ENCODE measurements at regions of chr1 and their contacts with region 1.

Region 1: DNA sequence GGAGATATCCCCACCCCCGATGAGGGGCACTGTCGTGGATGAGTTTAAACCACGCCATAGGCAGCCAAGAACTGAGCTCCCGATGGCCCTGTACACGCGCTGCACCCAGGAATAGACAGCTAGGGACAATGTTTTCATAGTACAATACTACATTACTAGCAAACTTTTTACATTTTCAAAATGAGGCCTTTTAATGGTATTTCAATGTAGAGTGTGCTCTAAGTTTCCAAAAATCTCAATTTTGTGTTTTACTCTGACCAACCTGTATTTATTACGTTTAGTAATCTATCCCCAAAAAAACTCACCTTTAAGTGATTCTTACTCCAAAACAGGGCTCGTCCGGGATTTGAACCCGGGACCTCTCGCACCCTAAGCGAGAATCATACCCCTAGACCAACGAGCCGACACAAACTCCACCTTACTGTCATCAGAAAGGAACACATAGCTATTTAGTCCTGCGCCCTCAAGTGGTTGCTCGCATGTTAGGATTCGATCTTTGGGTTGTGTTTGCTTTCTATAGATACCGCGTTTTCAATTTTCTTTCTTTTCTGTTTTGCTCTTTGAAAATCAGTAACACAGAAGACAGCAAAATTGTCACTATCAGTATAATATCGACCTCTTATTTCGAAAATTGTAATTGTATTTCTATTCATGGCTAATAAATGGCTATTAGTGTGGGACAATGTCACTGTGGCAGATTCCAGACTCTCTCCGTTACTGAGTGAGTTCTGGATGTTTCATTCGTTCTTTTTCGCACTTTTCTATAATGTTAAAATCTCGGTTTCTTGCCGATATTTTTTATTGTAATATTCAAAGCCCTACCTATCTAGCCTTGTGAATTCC is 6.4 kb upstream of the MPZL1 start:
- DNase-seq: peak; percentile 69
- ATAC-seq: peak; percentile 51
- H3K4me3 Mint-ChIP-seq: peak overlapping the region; percentile 85
- H3K27ac Mint-ChIP-seq: peak overlapping the region; percentile 98
- H3K4me1 Mint-ChIP-seq: peaks cover 68% of the 10 kb centered on the region
- H3K27me3 Mint-ChIP-seq: peaks cover 7% of the 10 kb centered on the region
- CTCF ChIP-seq: peak; percentile 68

Region 2: DNA sequence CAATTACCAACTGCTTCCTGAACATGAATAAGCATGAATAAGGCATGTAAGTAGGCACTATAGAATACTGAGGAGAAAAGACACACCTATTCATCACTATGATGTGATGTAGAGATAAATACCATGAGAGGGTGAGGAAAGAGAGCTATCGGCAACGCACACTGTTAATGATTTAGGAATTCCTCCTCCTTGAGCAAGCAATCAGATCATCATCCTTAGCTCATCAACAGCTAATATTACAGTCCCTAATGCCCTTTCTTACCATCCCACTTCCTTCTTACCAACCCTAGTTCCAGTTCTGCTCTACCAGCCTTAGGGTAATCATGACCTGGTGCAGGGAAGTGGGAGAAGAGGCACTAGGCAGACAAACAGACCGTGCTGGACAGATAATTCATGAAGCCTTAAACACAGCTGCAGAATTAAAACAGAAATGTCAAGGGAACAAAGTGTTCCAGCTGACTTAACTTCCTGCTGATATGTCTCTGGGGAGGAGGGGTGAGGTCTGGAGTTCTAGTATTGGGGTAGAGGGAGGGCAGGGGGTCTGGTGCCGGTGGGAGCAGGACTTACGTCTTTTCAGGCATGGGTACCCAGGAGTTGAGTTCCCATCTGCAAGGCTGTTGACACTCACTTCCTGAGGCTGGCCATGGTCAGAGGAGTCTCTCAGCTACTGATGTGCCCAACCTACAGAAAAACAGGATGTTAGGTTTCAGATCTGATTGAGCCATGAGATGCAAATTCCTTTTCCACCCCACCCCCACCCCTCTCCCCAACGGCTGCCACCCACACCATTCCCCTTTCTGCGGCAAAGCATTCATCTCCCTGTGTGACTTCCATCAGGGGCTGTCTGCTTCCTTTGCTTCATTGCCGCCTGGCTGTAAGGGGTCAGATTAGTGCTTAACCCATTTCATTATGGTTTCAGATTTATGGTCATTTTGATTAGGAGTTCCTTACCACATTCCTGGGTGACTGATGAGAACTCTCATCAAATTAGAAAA is 97.9 kb before region 1 on chr1:
- CTCF ChIA-PET with region 1: no interaction called
- POLR2A ChIA-PET with region 1: interaction called, 7 read pairs
- intact Hi-C with region 1: loop called (anchors 1 kb)
- DNase-seq: peak; percentile 62
- ATAC-seq: peak; percentile 89
- H3K4me3 Mint-ChIP-seq: peak overlapping the region; percentile 77
- H3K27ac Mint-ChIP-seq: peak overlapping the region; percentile 94
- H3K4me1 Mint-ChIP-seq: peaks cover 92% of the 10 kb centered on the region
- H3K27me3 Mint-ChIP-seq: no peaks in the 10 kb centered on the region
- CTCF ChIP-seq: no peak

Region 3: DNA sequence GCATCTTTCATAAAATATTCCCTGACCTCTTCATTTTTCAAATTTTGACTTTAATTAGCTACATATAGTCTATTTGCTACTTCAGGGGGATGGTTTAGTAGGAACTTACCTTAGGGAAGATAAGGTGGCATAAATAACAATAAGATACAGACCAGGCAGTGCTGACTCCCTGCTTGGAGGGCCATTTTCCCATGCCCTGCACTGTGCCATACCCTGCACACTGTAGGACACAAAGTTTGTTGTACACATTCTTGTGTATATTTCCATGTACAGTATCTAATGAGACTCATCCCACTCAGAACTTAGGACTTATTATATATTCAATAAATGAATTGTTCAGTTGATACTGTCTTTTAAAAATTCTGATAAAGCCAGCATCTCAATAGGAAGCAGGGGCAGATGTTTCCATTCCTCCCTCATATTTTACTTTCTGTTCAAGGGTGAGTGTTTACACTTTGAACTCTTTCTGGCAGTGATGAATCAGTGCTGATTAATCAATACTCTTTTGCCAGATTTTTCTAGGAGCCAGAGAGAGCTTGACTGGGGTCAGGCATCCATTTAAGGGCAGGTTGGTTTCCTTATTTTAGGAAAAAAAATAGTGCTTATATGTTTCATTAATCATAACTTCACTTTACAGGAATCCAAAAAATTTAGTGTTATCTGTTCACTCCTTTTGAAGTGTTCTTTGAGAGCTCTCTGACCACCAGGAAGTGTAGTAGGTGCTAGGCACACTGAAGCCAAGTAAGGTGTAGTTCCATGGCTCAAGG is 37.0 kb after region 1 on chr1:
- CTCF ChIA-PET with region 1: interaction called, 17 read pairs
- POLR2A ChIA-PET with region 1: interaction called, 12 read pairs
- intact Hi-C with region 1: loop called (anchors 1 kb)
- DNase-seq: no peak
- ATAC-seq: no peak
- H3K4me3 Mint-ChIP-seq: peak overlapping the region; percentile 77
- H3K27ac Mint-ChIP-seq: peak overlapping the region; percentile 84
- H3K4me1 Mint-ChIP-seq: peaks cover 80% of the 10 kb centered on the region
- H3K27me3 Mint-ChIP-seq: no peaks in the 10 kb centered on the region
- CTCF ChIP-seq: no peak

Region 4: DNA sequence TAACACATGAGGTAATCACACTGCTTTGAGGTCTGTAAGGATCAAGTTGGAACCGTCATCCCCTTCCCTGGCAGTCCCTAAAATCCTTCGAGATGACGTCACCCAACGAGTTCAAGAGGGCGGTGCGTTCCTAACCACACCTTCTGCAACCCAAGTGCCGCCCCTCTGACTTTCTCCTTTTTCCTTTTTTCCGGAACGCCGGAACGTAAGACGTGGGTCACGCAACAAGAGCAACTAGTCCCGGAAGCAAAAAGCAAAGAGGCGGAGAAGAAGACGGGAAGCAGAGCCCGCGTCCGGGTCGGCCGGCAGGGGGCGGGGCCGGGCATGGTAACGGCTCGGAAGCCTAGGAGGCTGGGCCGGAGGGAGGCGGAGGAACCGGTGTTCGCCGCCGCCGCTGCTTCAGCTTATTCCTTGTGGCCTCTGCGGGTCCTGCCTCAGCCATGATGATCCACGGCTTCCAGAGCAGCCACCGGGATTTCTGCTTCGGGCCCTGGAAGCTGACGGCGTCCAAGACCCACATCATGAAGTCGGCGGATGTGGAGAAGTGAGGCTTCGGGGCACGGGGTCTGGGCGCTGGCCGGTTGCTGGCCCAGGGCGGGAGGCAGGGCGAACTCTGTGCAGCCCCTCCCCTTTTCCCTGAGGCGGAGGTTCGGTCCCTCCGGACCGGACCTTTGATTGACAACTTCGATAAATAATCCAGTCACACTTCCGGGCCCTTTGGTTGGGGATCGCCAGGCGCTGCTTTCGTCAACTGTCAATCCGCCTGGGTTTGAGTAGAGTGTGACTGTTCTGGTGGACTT is 463.5 kb after region 1 on chr1 and contains the start of gene TIPRL:
- CTCF ChIA-PET with region 1: no interaction called
- POLR2A ChIA-PET with region 1: no interaction called
- intact Hi-C with region 1: loop called (anchors 2 kb)
- DNase-seq: peak; percentile 92
- ATAC-seq: peak; percentile 88
- H3K4me3 Mint-ChIP-seq: no peak within 1 kb of the TSS
- H3K27ac Mint-ChIP-seq: no peak within 1 kb of the TSS
- H3K4me1 Mint-ChIP-seq: peaks cover 2% of the 10 kb centered on the region
- H3K27me3 Mint-ChIP-seq: peaks cover 8% of the 10 kb centered on the region
- CTCF ChIP-seq: no peak
- total RNA-seq, gene TIPRL: 25.5 and 29.8 TPM in 2 replicates

Region 5: GRCh38 chr1:168273575-168273974 is 558.2 kb after region 1 on chr1:
- CTCF ChIA-PET with region 1: no interaction called
- POLR2A ChIA-PET with region 1: no interaction called
- intact Hi-C with region 1: no loop called
- DNase-seq: no peak
- ATAC-seq: no peak
- H3K4me3 Mint-ChIP-seq: no peak overlapping the region
- H3K27ac Mint-ChIP-seq: no peak overlapping the region
- H3K4me1 Mint-ChIP-seq: peaks cover 8% of the 10 kb centered on the region
- H3K27me3 Mint-ChIP-seq: no peaks in the 10 kb centered on the region
- CTCF ChIP-seq: no peak

Measured in activated B cell treated with CpG ODN at 0.5 μM for 24 hours (primary cell).